ENCODE measurements at regions of chr14 and their contacts with region 1.

Region 1: GRCh38 chr14:91996948-91997371 is 42.9 kb downstream of the TRIP11 start:
- DNase-seq: no peak
- H3K4me3 Mint-ChIP-seq: no peak overlapping the region
- H3K27ac Mint-ChIP-seq: no peak overlapping the region
- H3K4me1 Mint-ChIP-seq: peaks cover 38% of the 10 kb centered on the region
- H3K27me3 Mint-ChIP-seq: no peaks in the 10 kb centered on the region

Region 2: DNA sequence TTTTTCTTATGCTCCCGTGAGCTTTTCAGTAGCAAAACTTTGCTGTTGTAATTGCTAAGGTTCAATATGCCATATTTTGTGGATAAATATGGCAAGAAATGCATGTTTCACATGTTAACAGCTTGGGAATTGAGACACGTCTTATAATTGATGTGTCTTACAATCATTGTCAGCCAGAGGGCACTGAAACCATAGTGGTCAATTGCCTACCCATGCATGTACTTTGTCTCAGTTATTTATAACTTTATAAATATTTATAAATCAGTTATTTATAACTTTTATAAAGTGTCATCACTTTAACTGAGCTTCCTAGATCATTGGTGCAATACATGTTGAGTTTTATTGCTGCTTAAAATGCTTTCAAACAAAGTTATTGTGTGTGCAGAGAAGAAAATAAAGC is 347.0 kb before region 1 on chr14:
- CTCF ChIA-PET with region 1: interaction called, 13 read pairs
- POLR2A ChIA-PET with region 1: no interaction called
- DNase-seq: peak; percentile 18
- H3K4me3 Mint-ChIP-seq: no peak overlapping the region
- H3K27ac Mint-ChIP-seq: no peak overlapping the region
- H3K4me1 Mint-ChIP-seq: peaks cover 1% of the 10 kb centered on the region
- H3K27me3 Mint-ChIP-seq: no peaks in the 10 kb centered on the region

Region 3: GRCh38 chr14:91893007-91893406 is 104.0 kb before region 1 on chr14:
- CTCF ChIA-PET with region 1: no interaction called
- POLR2A ChIA-PET with region 1: no interaction called
- DNase-seq: no peak
- H3K4me3 Mint-ChIP-seq: no peak overlapping the region
- H3K27ac Mint-ChIP-seq: no peak overlapping the region
- H3K4me1 Mint-ChIP-seq: peaks cover 40% of the 10 kb centered on the region
- H3K27me3 Mint-ChIP-seq: no peaks in the 10 kb centered on the region

Region 4: GRCh38 chr14:91980127-91980741 is 16.7 kb before region 1 on chr14:
- CTCF ChIA-PET with region 1: interaction called, 14 read pairs
- POLR2A ChIA-PET with region 1: interaction called, 5 read pairs
- DNase-seq: no peak
- H3K4me3 Mint-ChIP-seq: no peak overlapping the region
- H3K27ac Mint-ChIP-seq: peak overlapping the region; percentile 10
- H3K4me1 Mint-ChIP-seq: peaks cover 36% of the 10 kb centered on the region
- H3K27me3 Mint-ChIP-seq: no peaks in the 10 kb centered on the region

Region 5: GRCh38 chr14:92106143-92106926 is 109.4 kb after region 1 on chr14 and contains the start of gene ATXN3:
- CTCF ChIA-PET with region 1: interaction called, 11 read pairs
- POLR2A ChIA-PET with region 1: no interaction called
- DNase-seq: peak; percentile 96
- H3K4me3 Mint-ChIP-seq: peak within 1 kb of the TSS; percentile 93
- H3K27ac Mint-ChIP-seq: peak within 1 kb of the TSS; percentile 92
- H3K4me1 Mint-ChIP-seq: peaks cover 38% of the 10 kb centered on the region
- H3K27me3 Mint-ChIP-seq: no peaks in the 10 kb centered on the region
- total RNA-seq, gene ATXN3: 29.3 to 30.5 TPM